H1 (cell line): ENCODE measurements at regions of chr11 and their contacts with region 1.

Region 1: GRCh38 chr11:46075168-46075567 is 46.1 kb downstream of the PHF21A start:
- DNase-seq: no peak
- H3K4me3 ChIP-seq: no peak overlapping the region
- H3K27ac ChIP-seq: no peak overlapping the region
- H3K4me1 ChIP-seq: 0 out of 7 replicates have a peak, but pooled peaks cover 0 to 3% (median 0%) of the 10 kb centered on the region in 4 experiments
- H3K27me3 ChIP-seq: no peaks in the 10 kb centered on the region
- CTCF ChIP-seq: no peak
- EP300 ChIP-seq: no peak
- POLR2A ChIP-seq: no peak
- RAD21 ChIP-seq: no peak

Region 2: DNA sequence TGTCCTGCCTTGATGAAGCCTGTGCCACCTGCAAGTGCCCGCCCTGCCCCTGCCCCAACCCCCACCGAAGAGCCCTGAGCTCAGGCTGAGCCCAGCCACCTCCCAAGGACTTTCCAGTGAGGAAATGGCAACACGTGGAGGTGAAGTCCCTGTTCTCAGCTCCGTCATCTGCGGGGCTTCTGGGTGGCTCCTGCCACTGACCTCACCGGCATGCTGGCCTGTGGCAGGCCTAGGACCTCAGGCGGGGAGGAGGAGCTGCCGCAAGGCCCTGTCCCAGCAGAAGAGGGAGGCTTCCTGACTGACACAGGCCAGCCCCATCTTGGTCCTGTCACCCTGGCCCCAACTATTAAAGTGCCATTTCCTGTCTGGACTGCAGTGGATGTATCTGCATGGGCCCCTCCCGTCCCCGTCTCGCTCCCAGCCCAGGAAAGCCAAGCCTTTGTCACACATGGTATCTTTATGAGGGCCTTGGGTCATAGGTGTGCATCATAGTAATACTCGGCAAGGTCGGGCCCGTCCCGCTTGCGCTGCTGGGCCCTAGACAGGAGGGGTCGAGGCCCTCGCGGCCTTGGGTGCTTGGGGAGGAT is 169.0 kb before region 1 on chr11:
- CTCF ChIA-PET with region 1: no interaction called
- POLR2A ChIA-PET with region 1: no interaction called
- DNase-seq: no peak
- H3K4me3 ChIP-seq: no peak overlapping the region
- H3K27ac ChIP-seq: no peak overlapping the region
- H3K4me1 ChIP-seq: peaks cover 0 to under 1% (median 0%) of the 10 kb centered on the region in 4 experiments; a peak in 1 of 7 replicates
- H3K27me3 ChIP-seq: no peaks in the 10 kb centered on the region
- CTCF ChIP-seq: no peak
- EP300 ChIP-seq: no peak
- POLR2A ChIP-seq: no peak
- RAD21 ChIP-seq: no peak

Region 3: DNA sequence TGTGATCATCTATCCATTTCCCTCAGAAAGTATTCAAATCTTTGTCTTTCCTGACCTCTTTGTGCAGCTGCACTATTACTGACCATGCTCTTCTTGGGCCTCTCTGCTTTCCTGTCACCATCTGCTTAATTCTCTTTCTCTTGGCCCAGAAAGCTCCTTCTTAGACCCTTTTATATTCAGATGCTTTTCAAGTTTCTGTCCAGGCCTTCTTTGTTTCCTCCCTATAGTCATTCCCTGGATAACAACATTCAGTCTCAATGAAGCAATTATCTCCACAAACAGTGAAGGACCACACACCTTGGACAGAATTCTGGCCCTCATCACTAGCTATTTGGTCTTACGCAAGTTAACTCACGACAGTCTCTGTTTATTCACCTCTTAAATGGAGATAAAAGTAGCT is 63.0 kb before region 1 on chr11:
- CTCF ChIA-PET with region 1: interaction called, 11 read pairs
- POLR2A ChIA-PET with region 1: no interaction called
- DNase-seq: no peak
- H3K4me3 ChIP-seq: 0 out of 8 replicates have a peak overlapping the region, but pooled peaks of 1 of the 4 experiments have one; percentile 4
- H3K27ac ChIP-seq: peak overlapping the region; percentile 62; the same call in 1 of the 2 replicates
- H3K4me1 ChIP-seq: peaks cover 0 to 11% (median 3%) of the 10 kb centered on the region in 4 experiments; a peak in 2 of 7 replicates
- H3K27me3 ChIP-seq: no peaks in the 10 kb centered on the region
- CTCF ChIP-seq: no peak
- EP300 ChIP-seq: peak in 1 of 2 experiments; percentile 33; a peak in 1 of 3 replicates
- POLR2A ChIP-seq: no peak
- RAD21 ChIP-seq: no peak

Region 4: DNA sequence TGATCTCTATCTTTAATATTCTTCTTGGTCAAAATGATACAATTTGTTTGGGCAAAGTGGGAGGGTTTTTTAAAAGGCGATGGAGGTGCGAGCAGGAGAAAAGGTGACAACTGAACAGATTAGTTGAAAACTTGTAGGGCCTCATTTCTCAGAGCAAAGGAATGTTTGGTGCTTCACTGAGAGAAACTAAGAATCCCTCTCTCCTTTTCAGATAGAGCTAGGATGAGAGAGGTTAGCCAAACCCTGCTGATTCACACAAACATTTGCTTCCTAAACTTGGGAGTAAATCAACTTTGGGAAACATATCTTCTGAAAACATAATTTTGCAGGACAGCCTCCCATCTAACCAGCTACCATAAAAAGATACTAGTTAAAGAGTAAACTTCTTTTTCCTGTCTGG is 10.9 kb before region 1 on chr11:
- CTCF ChIA-PET with region 1: interaction called, 13 read pairs
- POLR2A ChIA-PET with region 1: interaction called, 3 read pairs
- DNase-seq: no peak
- H3K4me3 ChIP-seq: no peak overlapping the region
- H3K27ac ChIP-seq: no peak overlapping the region
- H3K4me1 ChIP-seq: peaks cover 0 to 8% (median 3%) of the 10 kb centered on the region in 4 experiments; a peak in 3 of 7 replicates
- H3K27me3 ChIP-seq: no peaks in the 10 kb centered on the region
- CTCF ChIP-seq: no peak
- EP300 ChIP-seq: no peak
- POLR2A ChIP-seq: no peak
- RAD21 ChIP-seq: no peak